ENCODE measurements at regions of chr7 and their contacts with region 1.

Region 1: DNA sequence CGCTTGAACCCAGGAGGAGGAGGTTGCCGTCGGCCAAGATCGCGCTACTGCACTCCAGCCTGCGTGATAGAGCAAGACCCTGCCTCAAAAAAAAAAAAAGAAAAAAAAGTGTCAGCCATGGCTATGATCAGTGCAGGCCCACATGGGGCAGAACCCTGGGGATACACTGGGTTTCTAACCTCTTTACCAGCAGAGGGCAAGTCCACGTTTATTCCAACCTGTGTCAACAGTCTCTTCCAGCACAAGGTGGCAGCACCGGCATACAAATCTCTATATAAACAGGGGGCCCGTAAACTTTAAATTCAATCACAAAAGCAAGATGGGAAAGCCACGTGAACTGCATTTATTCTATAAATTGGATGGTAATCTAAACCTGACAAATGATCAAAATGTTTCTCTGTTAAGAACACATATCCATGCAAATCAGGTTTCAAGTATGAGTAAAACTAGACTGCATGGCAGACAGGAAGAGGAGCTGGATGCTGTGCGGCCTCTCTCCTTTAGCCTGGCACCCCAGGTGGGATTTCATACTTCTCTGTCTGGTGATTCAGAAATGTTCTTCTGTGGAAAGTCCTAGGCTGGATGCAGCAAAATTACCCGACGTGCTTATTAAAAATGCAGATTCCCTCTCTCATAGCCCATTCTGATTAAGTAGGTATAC is 60.0 kb upstream of the STEAP1B start:
- DNase-seq: peak; percentile 85
- H3K4me3 Mint-ChIP-seq: no peak overlapping the region
- H3K27ac Mint-ChIP-seq: no peak overlapping the region
- H3K4me1 Mint-ChIP-seq: peaks cover 48% of the 10 kb centered on the region
- H3K27me3 Mint-ChIP-seq: peaks cover 21% of the 10 kb centered on the region

Region 2: DNA sequence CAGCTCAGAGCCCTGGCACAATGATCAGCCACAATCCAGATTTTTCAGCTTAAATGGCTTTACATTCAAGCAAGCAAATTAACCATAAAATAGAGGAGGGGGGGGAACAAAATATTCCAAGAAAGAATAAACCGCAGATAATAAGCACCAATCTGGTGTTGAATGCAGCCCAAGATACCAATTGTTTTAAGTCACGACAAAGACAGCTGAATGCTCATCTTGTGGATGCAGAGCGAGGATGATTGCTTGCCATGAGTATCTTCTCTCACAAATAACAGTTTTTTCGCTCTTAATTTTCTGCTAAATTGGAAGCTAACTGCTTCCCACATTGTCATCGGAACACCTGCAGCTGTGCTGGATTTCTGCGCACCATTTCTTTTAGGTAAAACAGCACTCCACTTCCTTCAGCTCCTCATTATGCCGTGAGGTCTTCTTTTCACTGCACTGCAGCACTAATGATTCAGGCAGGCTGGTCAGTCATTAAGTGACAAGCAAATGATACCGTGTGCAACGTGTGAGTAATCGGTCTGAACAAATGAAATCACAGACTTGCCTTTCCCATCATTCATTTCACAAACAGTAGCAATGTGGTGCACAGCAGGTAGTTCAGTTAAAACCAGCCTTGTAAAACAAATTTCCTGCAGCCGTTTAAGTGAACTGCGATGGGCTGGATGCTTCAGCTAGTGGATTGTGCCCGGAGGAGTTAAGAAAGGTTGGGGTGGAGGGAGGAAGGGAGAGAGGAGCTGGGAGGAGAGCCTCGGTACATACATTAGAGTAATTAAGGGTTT is 507.9 kb before region 1 on chr7:
- CTCF ChIA-PET with region 1: no interaction called
- DNase-seq: no peak
- H3K4me3 Mint-ChIP-seq: no peak overlapping the region
- H3K27ac Mint-ChIP-seq: no peak overlapping the region
- H3K4me1 Mint-ChIP-seq: no peaks in the 10 kb centered on the region
- H3K27me3 Mint-ChIP-seq: peaks cover 14% of the 10 kb centered on the region

Region 3: GRCh38 chr7:22586786-22587140 is 26.8 kb after region 1 on chr7:
- CTCF ChIA-PET with region 1: interaction called, 10 read pairs
- DNase-seq: no peak
- H3K4me3 Mint-ChIP-seq: no peak overlapping the region
- H3K27ac Mint-ChIP-seq: no peak overlapping the region
- H3K4me1 Mint-ChIP-seq: peaks cover 12% of the 10 kb centered on the region
- H3K27me3 Mint-ChIP-seq: peaks cover 51% of the 10 kb centered on the region

Region 4: DNA sequence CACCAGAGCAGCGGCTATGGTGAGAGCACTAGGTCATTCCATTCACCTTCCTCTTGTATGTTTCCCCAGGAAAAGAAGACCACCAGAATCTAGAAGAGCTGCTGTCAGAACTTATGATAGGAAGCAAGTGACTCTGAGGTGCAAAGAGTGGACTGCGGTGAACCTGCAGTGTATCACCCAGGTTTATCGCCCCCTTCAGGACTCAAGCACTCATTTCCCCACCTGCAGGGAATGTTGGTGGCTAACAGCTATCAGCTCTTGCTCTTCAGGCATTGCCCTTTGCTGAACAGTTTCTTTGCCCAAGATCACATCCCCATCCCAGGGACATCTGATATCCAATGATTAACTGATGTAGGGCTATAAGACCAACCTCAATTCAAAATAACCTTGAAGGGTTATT is 100.8 kb after region 1 on chr7:
- CTCF ChIA-PET with region 1: interaction called, 12 read pairs
- DNase-seq: no peak
- H3K4me3 Mint-ChIP-seq: no peak overlapping the region
- H3K27ac Mint-ChIP-seq: no peak overlapping the region
- H3K4me1 Mint-ChIP-seq: peaks cover 54% of the 10 kb centered on the region
- H3K27me3 Mint-ChIP-seq: peaks cover 9% of the 10 kb centered on the region

Region 5: DNA sequence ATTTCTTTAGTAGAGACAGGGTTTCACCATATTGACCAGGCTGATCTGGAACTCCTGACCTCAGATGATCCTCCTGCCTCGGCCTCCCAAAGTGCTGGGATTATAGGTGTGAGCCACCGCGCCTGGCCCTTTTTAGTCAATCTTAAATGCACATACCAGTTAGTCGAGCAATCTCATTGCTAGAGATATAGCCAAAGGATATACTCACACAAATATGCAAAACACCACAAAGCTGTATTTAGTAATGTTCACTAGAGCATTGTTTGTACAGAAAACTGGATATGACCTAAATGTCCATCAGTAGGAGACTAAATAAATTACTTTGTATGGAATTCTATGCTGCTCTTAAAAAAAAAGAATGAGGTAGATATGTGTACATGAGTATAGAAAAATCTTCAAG is 142.6 kb after region 1 on chr7:
- CTCF ChIA-PET with region 1: no interaction called
- DNase-seq: no peak
- H3K4me3 Mint-ChIP-seq: no peak overlapping the region
- H3K27ac Mint-ChIP-seq: no peak overlapping the region
- H3K4me1 Mint-ChIP-seq: peaks cover 28% of the 10 kb centered on the region
- H3K27me3 Mint-ChIP-seq: peaks cover 17% of the 10 kb centered on the region

Region 6: GRCh38 chr7:22782616-22783232 is 222.8 kb after region 1 on chr7:
- CTCF ChIA-PET with region 1: interaction called, 84 read pairs
- DNase-seq: peak; percentile 88
- H3K4me3 Mint-ChIP-seq: no peak overlapping the region
- H3K27ac Mint-ChIP-seq: no peak overlapping the region
- H3K4me1 Mint-ChIP-seq: no peaks in the 10 kb centered on the region
- H3K27me3 Mint-ChIP-seq: peaks cover 19% of the 10 kb centered on the region